AG04450 (cell line): ENCODE measurements at regions of chr9 and their contacts with region 1.

Region 1: DNA sequence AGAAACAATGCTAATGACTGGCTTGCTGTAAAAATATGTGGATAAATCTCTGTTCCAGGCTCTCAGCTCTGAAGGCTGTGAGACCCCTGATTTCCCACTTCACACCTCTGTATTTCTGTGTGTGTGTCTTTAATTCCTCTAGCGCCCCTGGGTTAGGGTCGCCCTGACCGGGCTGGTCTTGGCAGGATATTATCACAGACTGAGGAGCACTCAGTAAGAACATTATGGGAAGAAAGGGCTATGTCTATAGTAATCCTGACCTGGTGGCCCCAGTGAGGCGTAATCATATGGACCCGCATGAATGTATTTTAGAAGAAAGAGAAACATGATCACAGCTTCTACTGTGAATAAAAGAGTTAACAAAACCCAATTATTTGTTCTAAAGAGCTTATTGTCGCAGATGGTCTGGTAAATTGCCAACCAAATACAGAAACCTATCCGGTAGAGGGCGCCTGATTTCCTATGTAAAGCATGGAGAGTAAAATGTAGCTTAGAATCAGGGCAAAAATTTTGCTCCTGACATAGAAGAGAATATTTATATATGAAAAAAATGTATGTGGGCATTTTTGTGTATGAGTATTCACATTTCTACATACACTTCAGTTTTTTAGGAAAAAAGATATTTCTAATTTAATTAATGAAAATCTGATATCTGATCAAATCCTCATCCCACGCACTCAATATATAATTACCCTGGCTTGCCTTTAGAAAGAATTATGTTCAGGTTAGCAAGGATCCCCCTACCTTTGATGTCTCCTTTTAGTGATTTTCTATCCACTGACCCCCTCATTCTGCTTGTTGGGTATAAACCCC is 5.8 kb upstream of the IFNA1 start:
- DNase-seq: peak; percentile 52
- H3K4me3 ChIP-seq: no peak overlapping the region
- H3K27ac ChIP-seq: no peak overlapping the region
- H3K27me3 ChIP-seq: no peaks in the 10 kb centered on the region
- CTCF ChIP-seq: peak; percentile 73

Region 2: GRCh38 chr9:21317956-21318923 is 116.2 kb before region 1 on chr9:
- CTCF ChIA-PET with region 1: interaction called, 28 read pairs
- POLR2A ChIA-PET with region 1: no interaction called
- DNase-seq: no peak
- H3K4me3 ChIP-seq: no peak overlapping the region
- H3K27ac ChIP-seq: no peak overlapping the region
- H3K27me3 ChIP-seq: peaks cover 5% of the 10 kb centered on the region
- CTCF ChIP-seq: peak; percentile 75

Region 3: DNA sequence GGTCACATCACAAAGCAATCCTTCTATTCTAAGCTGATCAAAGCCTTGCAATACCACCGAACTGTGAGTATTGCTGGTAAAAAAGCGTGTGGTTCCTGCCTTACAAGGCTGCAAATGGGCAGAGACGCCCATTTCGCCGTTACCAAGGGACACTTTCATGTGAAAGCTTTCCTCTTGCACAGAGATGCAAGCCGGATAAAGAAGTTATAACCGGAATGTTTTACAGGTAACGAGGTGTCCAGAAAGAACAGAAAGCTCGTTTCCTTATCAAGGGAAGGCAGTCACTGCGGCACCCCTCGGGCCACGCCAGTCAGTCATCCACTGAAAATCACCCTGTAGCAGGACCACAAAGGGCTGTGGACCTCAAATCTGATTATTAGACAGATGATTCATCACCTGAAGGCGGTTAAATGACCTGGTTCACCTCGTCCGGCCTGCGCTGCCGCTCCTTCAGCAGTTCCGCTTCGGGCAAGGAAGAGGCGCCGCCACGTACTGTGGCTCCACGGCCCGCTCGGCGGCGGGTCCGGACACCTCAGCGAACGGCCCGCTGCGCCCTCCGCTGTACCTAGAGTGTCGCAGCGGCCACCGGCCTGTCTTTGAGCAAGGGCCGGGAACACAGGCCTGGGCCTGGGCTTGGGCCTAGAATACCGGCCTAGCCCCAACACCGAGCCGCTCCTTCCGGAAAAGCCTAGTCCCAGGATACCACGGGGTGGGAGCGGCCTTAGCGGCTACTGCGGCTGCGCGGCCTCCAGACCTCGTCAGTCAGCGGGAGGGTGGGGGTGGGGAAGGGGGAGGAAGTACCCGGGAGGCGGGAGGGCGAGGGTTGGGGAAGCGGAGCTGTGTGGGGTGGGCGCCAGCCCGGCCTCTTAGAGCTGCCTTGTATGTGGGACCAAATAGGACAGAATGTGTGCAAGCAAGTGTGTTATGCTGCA is 99.4 kb before region 1 on chr9 and contains the start of gene KLHL9:
- CTCF ChIA-PET with region 1: interaction called, 29 read pairs
- POLR2A ChIA-PET with region 1: no interaction called
- DNase-seq: peak; percentile 82
- H3K4me3 ChIP-seq: peak within 1 kb of the TSS; percentile 84
- H3K27ac ChIP-seq: peak within 1 kb of the TSS; percentile 81
- H3K27me3 ChIP-seq: no peaks in the 10 kb centered on the region
- CTCF ChIP-seq: no peak
- polyA plus RNA-seq, gene KLHL9: 32.4 and 42.2 TPM in 2 replicates

Region 4: DNA sequence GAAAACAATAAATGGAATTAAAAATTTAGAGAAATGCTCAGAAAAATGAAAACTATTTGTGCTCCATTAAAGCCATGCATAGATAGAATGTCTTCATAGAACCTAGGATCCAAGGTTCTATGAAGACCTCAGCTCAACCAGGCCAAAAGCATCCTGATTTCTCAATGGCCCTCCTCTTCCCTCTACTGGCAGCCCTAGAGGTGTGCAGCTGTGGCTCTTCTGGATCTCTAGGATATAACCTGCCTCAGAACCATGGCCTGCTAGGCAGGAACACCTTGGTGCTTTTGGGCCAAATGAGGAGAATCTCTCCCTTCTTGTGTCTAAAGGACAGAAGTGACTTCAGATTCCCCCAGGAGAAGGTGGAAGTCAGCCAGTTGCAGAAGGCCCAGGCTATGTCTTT is 20.9 kb after region 1 on chr9:
- CTCF ChIA-PET with region 1: interaction called, 53 read pairs
- POLR2A ChIA-PET with region 1: no interaction called
- DNase-seq: no peak
- H3K4me3 ChIP-seq: no peak overlapping the region
- H3K27ac ChIP-seq: no peak overlapping the region
- H3K27me3 ChIP-seq: no peaks in the 10 kb centered on the region
- CTCF ChIP-seq: peak; percentile 69

Region 5: DNA sequence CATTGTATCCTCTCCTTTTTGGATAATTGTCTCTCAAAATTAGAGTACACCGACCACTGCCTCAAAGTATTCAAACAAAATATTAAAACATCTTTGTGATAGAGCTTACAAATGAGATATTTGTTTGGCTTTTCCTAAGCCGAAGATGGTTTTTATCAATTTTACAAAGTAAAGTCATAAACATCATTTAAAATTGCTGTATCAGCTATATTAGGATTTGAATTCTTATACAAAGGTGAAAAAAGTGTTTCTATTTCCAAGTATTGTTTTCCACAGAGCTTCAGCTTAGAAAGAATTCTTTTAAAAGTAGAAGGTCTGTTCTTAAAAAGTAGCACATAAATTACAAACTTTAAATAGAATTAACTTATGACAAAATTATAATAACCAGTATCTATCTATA is 164.3 kb after region 1 on chr9:
- CTCF ChIA-PET with region 1: no interaction called
- POLR2A ChIA-PET with region 1: no interaction called
- DNase-seq: no peak
- H3K4me3 ChIP-seq: no peak overlapping the region
- H3K27ac ChIP-seq: no peak overlapping the region
- H3K27me3 ChIP-seq: no peaks in the 10 kb centered on the region
- CTCF ChIP-seq: no peak

Region 6: GRCh38 chr9:21616082-21616778 is 181.8 kb after region 1 on chr9:
- CTCF ChIA-PET with region 1: no interaction called
- POLR2A ChIA-PET with region 1: no interaction called
- DNase-seq: peak; percentile 87
- H3K4me3 ChIP-seq: no peak overlapping the region
- H3K27ac ChIP-seq: peak overlapping the region; percentile 42
- H3K27me3 ChIP-seq: no peaks in the 10 kb centered on the region
- CTCF ChIP-seq: no peak

Region 7: GRCh38 chr9:21715816-21716215 is 281.4 kb after region 1 on chr9:
- CTCF ChIA-PET with region 1: no interaction called
- POLR2A ChIA-PET with region 1: no interaction called
- DNase-seq: no peak
- H3K4me3 ChIP-seq: no peak overlapping the region
- H3K27ac ChIP-seq: no peak overlapping the region
- H3K27me3 ChIP-seq: no peaks in the 10 kb centered on the region
- CTCF ChIP-seq: no peak

Region 8: DNA sequence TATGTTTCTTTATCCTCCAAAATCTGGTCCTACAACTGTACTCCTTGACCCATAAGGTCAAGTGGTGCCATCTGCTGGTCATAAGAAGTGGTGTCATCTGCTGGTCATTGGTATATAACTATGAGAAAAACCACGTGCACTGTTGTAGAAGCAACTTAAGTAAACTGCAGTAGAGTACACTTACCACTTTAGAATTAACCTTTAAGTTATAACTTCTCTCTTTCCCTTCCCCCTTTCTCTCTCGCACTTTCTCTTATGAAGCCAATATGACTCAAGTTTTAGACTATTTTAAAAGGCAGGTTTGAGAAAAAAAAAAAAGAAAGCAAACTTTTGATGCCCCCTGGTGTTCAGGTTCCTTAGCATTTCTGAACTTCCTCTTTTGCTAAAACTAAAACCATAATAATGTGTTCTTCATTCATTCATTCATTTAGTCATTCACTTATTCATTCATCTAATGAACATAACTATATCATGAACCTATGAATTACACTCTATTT is 355.2 kb after region 1 on chr9:
- CTCF ChIA-PET with region 1: interaction called, 61 read pairs
- POLR2A ChIA-PET with region 1: no interaction called
- DNase-seq: peak; percentile 88
- H3K4me3 ChIP-seq: peak overlapping the region; percentile 49
- H3K27ac ChIP-seq: no peak overlapping the region
- H3K27me3 ChIP-seq: no peaks in the 10 kb centered on the region
- CTCF ChIP-seq: peak; percentile 68